MCF 10A (cell line): ENCODE measurements at regions of chr17 and their contacts with region 1.

Region 1: DNA sequence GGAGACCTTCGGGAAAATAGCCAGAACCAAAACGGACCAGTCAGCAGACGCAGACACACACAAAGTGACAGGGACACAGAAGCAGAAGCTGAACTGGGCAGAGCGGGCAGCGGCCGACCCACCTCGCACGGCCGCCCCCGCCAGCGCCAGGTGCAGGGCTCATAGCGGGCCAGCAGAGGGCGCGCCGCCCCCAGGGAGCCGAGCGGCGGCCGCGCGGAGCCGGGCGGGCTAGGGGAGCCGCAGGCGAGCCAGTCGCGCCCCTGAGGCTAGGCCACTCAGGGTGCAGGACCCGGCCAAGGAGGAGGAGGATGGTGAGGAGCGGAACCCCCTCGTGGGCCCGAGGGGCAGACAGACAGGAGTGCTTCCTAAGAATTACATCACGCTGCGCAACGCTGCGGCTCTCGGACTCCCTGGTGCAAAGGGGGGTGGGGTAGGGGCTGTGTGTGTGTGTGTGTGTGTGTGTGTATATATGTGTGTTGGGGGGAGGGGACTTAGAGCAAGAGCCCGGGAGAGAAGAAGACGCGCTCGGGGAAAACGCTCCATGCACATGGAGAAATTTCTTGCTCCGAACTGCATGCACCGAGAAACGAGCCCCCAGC is 913 bp upstream of the NOG start:
- DNase-seq: peak; percentile 52
- H3K4me3 Mint-ChIP-seq: peak overlapping the region; percentile 75
- H3K27ac Mint-ChIP-seq: no peak overlapping the region
- H3K4me1 Mint-ChIP-seq: no peaks in the 10 kb centered on the region
- H3K27me3 Mint-ChIP-seq: peaks cover 24% of the 10 kb centered on the region
- CTCF ChIP-seq: peak; percentile 92

Region 2: DNA sequence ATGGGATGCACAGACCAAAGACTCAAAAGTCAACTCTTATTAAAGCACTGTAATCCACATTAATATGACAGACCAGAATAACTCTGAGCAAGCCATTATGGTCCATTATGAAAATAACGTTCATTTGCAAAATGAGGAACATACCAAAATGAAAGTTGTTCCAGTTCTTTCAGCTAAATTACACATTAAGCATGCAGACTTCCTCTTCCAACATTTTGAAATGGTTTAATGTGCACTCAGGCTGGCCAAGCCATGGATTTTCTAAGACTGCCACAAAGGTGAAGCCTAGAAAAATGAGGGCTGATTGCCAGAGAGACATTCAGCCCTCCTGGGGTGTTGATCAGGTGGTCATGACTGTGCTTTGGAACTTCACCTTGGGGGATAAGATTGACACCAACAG is 55.8 kb before region 1 on chr17:
- CTCF ChIA-PET with region 1: no interaction called
- POLR2A ChIA-PET with region 1: no interaction called
- intact Hi-C with region 1: no loop called
- DNase-seq: no peak
- H3K4me3 Mint-ChIP-seq: no peak overlapping the region
- H3K27ac Mint-ChIP-seq: no peak overlapping the region
- H3K4me1 Mint-ChIP-seq: no peaks in the 10 kb centered on the region
- H3K27me3 Mint-ChIP-seq: peaks cover 40% of the 10 kb centered on the region
- CTCF ChIP-seq: no peak

Region 3: DNA sequence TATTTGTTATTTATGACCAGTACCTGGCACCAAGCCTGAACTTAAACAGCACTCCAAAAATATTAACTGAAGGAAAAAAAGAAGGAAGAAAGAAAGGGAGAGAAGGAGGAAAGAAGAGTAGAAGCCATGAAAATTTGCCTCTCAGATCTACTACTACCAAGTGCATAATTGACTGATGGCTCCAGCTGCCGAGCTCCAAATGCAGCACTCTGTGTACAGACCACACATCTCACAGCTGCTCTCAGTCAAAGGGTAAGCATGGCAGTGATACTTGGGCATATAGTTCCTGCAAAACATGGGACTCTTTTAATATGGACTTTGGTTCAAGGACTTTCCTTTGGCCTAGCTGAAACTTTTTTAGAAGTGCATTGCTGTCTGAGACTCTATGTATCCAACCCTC is 43.1 kb before region 1 on chr17:
- CTCF ChIA-PET with region 1: no interaction called
- POLR2A ChIA-PET with region 1: no interaction called
- intact Hi-C with region 1: no loop called
- DNase-seq: no peak
- H3K4me3 Mint-ChIP-seq: no peak overlapping the region
- H3K27ac Mint-ChIP-seq: no peak overlapping the region
- H3K4me1 Mint-ChIP-seq: no peaks in the 10 kb centered on the region
- H3K27me3 Mint-ChIP-seq: no peaks in the 10 kb centered on the region
- CTCF ChIP-seq: no peak

Region 4: DNA sequence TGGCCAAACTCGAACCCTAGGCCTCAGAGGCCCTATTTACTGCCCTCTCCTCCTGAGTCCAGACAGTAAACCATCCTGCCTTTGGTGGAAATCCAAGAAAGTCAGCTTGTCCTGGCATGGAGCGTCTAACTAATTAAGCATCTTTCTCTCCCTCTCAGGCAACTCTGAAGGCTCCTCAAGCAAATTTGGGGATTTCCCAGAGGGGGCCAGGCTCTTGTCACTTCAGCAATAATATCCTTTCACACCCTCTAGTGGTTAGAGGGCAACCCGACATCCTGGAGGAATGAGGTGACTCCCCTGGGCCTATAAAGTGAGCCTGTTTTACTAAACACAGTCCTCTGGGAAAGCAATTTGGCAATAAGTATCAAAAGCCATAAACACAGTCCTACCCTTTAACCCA is 61.3 kb after region 1 on chr17:
- CTCF ChIA-PET with region 1: interaction called, 6 read pairs
- POLR2A ChIA-PET with region 1: no interaction called
- intact Hi-C with region 1: loop called (anchors 1 kb)
- DNase-seq: peak; percentile 78
- H3K4me3 Mint-ChIP-seq: no peak overlapping the region
- H3K27ac Mint-ChIP-seq: peak overlapping the region; percentile 40
- H3K4me1 Mint-ChIP-seq: peaks cover 2% of the 10 kb centered on the region
- H3K27me3 Mint-ChIP-seq: no peaks in the 10 kb centered on the region
- CTCF ChIP-seq: peak; percentile 49

Region 5: GRCh38 chr17:56699186-56699895 is 106.8 kb after region 1 on chr17:
- CTCF ChIA-PET with region 1: interaction called, 12 read pairs
- POLR2A ChIA-PET with region 1: interaction called, 7 read pairs
- intact Hi-C with region 1: loop called (anchors 1 kb)
- DNase-seq: peak; percentile 98
- H3K4me3 Mint-ChIP-seq: peak overlapping the region; percentile 67
- H3K27ac Mint-ChIP-seq: peak overlapping the region; percentile 70
- H3K4me1 Mint-ChIP-seq: peaks cover 14% of the 10 kb centered on the region
- H3K27me3 Mint-ChIP-seq: no peaks in the 10 kb centered on the region
- CTCF ChIP-seq: no peak

Region 6: GRCh38 chr17:56707312-56708219 is 115.0 kb after region 1 on chr17:
- CTCF ChIA-PET with region 1: interaction called, 275 read pairs
- POLR2A ChIA-PET with region 1: no interaction called
- intact Hi-C with region 1: no loop called
- DNase-seq: no peak
- H3K4me3 Mint-ChIP-seq: no peak overlapping the region
- H3K27ac Mint-ChIP-seq: no peak overlapping the region
- H3K4me1 Mint-ChIP-seq: no peaks in the 10 kb centered on the region
- H3K27me3 Mint-ChIP-seq: no peaks in the 10 kb centered on the region
- CTCF ChIP-seq: no peak

Region 7: DNA sequence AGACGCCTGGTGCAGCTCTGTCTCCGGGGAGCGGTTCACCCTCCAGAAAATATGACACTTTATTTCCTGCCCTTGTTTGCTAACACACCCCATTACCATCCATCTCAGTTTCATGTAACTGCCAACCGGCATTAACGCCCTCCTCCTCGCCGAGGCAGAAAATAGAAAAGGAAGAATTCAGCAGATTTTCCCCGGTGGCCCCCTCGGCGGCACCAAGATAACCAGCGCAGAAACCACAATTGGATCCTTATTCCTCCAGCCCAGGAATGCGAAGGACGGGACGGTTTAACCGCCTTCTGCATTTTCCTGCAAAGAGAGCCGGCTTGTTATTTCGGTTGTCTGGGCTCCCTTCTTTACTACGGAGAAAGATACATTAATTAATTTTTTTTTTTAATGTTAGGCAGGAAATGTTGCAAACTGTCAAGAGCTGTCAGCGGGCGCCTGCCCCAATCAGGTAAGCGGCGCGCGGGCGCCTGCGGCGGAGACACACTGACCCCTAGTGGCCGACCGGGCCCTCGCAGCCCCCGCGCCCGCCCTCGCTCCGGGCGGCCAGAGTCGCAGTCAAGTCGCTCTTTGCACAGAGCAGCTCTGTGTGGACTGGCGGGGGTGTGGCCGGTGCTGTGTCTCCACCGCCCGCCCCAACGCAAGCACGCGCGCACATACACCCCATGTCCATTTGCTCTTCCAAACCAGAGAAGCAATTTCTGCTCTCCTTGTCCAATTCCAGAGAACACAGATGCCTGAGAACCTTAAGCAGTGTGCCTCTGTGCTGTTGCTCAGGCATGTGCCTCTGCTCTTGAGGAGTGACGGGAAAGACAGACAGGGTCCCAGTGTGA is 187.5 kb after region 1 on chr17:
- CTCF ChIA-PET with region 1: interaction called, 58 read pairs
- POLR2A ChIA-PET with region 1: interaction called, 17 read pairs
- intact Hi-C with region 1: loop called (anchors 1 kb)
- DNase-seq: peak; percentile 79
- H3K4me3 Mint-ChIP-seq: peak overlapping the region; percentile 82
- H3K27ac Mint-ChIP-seq: no peak overlapping the region
- H3K4me1 Mint-ChIP-seq: peaks cover 32% of the 10 kb centered on the region
- H3K27me3 Mint-ChIP-seq: no peaks in the 10 kb centered on the region
- CTCF ChIP-seq: peak; percentile 94

Region 8: DNA sequence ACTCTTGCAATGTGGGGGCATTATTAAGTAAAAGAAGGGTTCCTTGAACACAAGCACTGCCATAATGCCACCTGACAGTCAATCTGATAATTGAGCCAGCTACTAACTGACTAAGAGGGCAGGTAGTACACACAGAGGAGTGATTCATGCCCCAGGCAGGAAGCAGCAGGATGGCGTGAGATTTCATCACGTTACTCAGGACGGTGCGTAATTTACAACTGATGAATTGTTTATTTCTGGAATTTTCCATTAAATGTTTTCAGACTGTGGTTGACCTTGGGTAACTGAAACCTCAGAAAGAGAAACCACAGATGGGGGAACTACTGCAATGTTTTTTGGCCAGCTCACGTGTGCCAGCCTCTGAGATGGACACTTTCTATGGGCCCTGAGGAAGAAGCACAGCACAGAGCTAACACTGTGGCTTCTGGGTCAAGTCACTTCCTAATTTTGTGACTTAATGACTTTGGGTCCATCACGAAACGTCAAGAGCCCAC is 194.4 kb after region 1 on chr17:
- CTCF ChIA-PET with region 1: interaction called, 58 read pairs
- POLR2A ChIA-PET with region 1: interaction called, 6 read pairs
- intact Hi-C with region 1: no loop called
- DNase-seq: peak; percentile 97
- H3K4me3 Mint-ChIP-seq: peak overlapping the region; percentile 61
- H3K27ac Mint-ChIP-seq: peak overlapping the region; percentile 96
- H3K4me1 Mint-ChIP-seq: peaks cover 40% of the 10 kb centered on the region
- H3K27me3 Mint-ChIP-seq: no peaks in the 10 kb centered on the region
- CTCF ChIP-seq: no peak

Region 9: GRCh38 chr17:56939901-56940343 is 347.3 kb after region 1 on chr17:
- CTCF ChIA-PET with region 1: interaction called, 5 read pairs
- POLR2A ChIA-PET with region 1: no interaction called
- intact Hi-C with region 1: loop called (anchors 10 kb)
- DNase-seq: peak; percentile 71
- H3K4me3 Mint-ChIP-seq: no peak overlapping the region
- H3K27ac Mint-ChIP-seq: no peak overlapping the region
- H3K4me1 Mint-ChIP-seq: peaks cover 15% of the 10 kb centered on the region
- H3K27me3 Mint-ChIP-seq: no peaks in the 10 kb centered on the region
- CTCF ChIP-seq: peak; percentile 84